ENCODE measurements at regions of chr11 and their contacts with region 1.

Region 1: DNA sequence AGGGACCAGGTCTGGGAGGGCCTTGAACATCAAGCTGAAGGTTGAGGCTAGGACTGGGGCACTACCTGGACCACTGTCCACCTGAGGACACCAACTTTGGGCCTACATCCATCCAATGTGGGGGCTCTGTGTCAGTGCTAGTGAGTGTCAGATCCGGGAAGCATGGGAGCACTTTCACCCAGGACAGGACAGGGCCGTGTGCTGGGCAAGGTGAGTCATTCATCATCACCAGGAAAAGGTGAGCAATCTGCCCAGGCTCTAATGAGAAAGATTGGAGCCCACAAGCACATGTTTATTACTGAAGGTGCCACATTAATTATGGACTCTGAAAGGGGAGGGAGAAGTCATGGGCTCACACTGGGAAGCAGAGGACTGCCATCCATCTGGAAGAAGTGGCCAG is 39.7 kb upstream of the DRD2 start:
- DNase-seq: peak; percentile 68
- H3K4me3 ChIP-seq: no peak overlapping the region
- H3K27ac ChIP-seq: peak overlapping the region; percentile 26
- H3K4me1 ChIP-seq: peaks cover 25% of the 10 kb centered on the region
- H3K27me3 ChIP-seq: no peaks in the 10 kb centered on the region
- CTCF ChIP-seq: no peak

Region 2: GRCh38 chr11:113384551-113384950 is 130.3 kb before region 1 on chr11:
- CTCF ChIA-PET with region 1: no interaction called
- dilution Hi-C with region 1: loop called (anchors 5 kb)
- in situ Hi-C with region 1: no loop called
- intact Hi-C with region 1: no loop called
- DNase-seq: peak; percentile 100
- H3K4me3 ChIP-seq: no peak overlapping the region
- H3K27ac ChIP-seq: peak overlapping the region; percentile 85
- H3K4me1 ChIP-seq: peaks cover 41% of the 10 kb centered on the region
- H3K27me3 ChIP-seq: no peaks in the 10 kb centered on the region
- CTCF ChIP-seq: no peak

Region 3: GRCh38 chr11:113417428-113417827 is 97.4 kb before region 1 on chr11:
- CTCF ChIA-PET with region 1: no interaction called
- dilution Hi-C with region 1: no loop called
- in situ Hi-C with region 1: no loop called
- intact Hi-C with region 1: no loop called
- DNase-seq: no peak
- H3K4me3 ChIP-seq: no peak overlapping the region
- H3K27ac ChIP-seq: no peak overlapping the region
- H3K4me1 ChIP-seq: no peaks in the 10 kb centered on the region
- H3K27me3 ChIP-seq: no peaks in the 10 kb centered on the region
- CTCF ChIP-seq: no peak

Region 4: GRCh38 chr11:114243461-114244372 is 728.9 kb after region 1 on chr11:
- CTCF ChIA-PET with region 1: no interaction called
- dilution Hi-C with region 1: no loop called
- in situ Hi-C with region 1: no loop called
- intact Hi-C with region 1: no loop called
- DNase-seq: no peak
- H3K4me3 ChIP-seq: no peak overlapping the region
- H3K27ac ChIP-seq: no peak overlapping the region
- H3K4me1 ChIP-seq: no peaks in the 10 kb centered on the region
- H3K27me3 ChIP-seq: no peaks in the 10 kb centered on the region
- CTCF ChIP-seq: no peak

Measured in mammary epithelial cell (primary cell).